MCF 10A (cell line): ENCODE measurements at regions of chr14 and their contacts with region 1.

Region 1: DNA sequence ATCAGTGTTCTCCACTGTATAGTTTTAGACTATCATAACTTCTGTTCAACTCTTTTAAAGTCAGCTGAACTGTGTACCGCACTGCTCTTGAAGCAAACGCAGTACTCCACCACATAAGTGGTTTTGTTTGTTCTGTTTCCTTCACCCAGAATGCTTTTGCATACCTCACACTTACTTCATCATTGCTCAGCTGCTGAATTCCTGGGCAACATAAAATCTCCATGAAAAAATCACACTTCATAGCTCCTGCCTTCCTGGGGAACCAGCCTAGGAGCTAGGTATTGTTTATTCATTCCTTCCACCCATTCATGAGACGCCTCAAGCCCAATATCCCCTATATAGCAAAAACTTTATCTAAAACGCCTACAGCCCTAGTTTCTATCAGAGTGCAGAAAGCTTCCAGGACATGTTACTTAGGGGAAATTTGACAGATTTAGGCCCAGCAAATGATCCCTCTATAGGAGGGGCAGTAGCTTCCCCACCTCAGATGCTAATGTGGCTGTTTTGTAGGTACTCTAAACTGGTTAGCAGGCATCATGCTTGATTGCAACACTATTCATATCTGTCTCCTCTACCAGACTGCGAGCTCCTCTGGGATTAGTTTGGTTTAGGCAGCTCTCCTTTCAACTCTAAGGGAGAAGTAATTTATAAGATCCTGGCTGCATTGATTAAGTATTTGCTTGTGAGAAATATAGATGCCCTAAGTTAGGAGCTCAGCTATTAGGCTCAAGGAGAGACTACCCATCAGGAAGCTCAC is 44.5 kb downstream of the LRRC9 start:
- DNase-seq: peak; percentile 3
- H3K4me3 Mint-ChIP-seq: peak overlapping the region; percentile 83
- H3K27ac Mint-ChIP-seq: no peak overlapping the region
- H3K4me1 Mint-ChIP-seq: peaks cover 18% of the 10 kb centered on the region
- H3K27me3 Mint-ChIP-seq: no peaks in the 10 kb centered on the region
- CTCF ChIP-seq: no peak

Region 2: DNA sequence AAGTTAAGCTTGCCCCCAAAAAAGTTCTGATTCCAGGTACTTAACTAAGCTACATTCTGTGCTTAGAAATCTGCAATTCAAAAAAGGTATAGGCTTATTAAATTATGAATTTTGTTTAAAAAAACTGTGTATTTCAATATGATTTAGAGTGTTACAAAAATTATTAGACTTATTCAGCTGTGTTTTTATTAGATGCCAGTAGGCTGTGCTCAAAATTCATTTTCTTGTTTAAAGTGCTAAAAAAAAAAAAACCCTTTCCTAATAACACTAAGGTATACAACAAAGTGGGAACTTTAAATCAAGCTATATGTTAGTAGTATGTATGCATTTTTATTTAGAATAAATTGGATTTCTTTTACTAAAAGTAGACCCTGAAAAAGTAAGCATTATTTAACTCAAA is 19.5 kb before region 1 on chr14:
- CTCF ChIA-PET with region 1: interaction called, 17 read pairs
- POLR2A ChIA-PET with region 1: no interaction called
- intact Hi-C with region 1: no loop called
- DNase-seq: no peak
- H3K4me3 Mint-ChIP-seq: no peak overlapping the region
- H3K27ac Mint-ChIP-seq: no peak overlapping the region
- H3K4me1 Mint-ChIP-seq: no peaks in the 10 kb centered on the region
- H3K27me3 Mint-ChIP-seq: no peaks in the 10 kb centered on the region
- CTCF ChIP-seq: no peak

Region 3: GRCh38 chr14:60002819-60003492 is 38.5 kb after region 1 on chr14:
- CTCF ChIA-PET with region 1: interaction called, 10 read pairs
- POLR2A ChIA-PET with region 1: no interaction called
- intact Hi-C with region 1: no loop called
- DNase-seq: no peak
- H3K4me3 Mint-ChIP-seq: no peak overlapping the region
- H3K27ac Mint-ChIP-seq: no peak overlapping the region
- H3K4me1 Mint-ChIP-seq: peaks cover under 1% of the 10 kb centered on the region
- H3K27me3 Mint-ChIP-seq: no peaks in the 10 kb centered on the region
- CTCF ChIP-seq: no peak

Region 4: GRCh38 chr14:60064491-60065072 is 100.2 kb after region 1 on chr14:
- CTCF ChIA-PET with region 1: interaction called, 10 read pairs
- POLR2A ChIA-PET with region 1: interaction called, 7 read pairs
- intact Hi-C with region 1: loop called (anchors 2 kb)
- DNase-seq: peak; percentile 44
- H3K4me3 Mint-ChIP-seq: no peak overlapping the region
- H3K27ac Mint-ChIP-seq: no peak overlapping the region
- H3K4me1 Mint-ChIP-seq: peaks cover 8% of the 10 kb centered on the region
- H3K27me3 Mint-ChIP-seq: no peaks in the 10 kb centered on the region
- CTCF ChIP-seq: peak; percentile 53